ENCODE measurements at regions of chr1 and their contacts with region 1.

Region 1: DNA sequence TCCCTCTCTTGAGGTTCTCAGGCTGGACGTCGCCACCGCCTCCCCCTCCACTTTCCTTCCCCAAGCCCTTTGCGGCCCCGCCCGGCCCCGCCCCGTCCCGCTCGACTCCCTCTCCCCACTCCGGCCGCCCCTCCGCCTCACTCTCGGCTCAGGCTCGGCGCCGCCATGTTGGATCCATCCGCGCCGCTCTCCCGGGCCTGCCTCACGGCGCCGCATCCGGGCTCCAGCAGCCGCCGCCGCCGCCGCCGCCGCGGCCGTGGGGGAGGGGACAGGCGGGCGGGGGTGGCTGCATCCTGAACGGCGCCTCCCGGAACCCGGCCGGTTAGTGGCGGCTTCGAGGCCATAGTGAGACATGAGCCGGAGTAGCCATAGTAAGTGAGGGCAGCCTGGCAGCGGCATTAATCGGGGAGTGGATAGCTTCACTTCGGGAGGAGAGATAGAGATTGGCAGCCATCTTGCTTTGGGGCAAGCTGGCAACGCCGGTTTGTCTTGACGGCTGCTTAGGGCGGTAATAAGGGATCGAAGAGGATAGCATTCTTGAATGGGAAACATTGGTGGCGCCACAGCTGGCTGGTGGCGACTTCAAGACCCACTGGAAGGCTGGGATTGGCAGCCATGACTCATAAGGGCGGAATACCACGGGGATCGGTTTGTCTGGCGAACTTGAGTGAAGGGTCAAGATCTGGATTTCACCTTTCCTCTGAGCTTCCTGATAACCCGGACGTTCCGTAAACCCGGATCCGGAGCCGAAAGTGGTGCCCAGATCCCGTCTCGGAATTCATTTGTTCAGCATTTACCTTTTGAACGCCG is at the start of gene DEDD:
- DNase-seq: peak; percentile 89 to 98
- H3K4me3 ChIP-seq: peak within 1 kb of the TSS; percentile 71 to 89
- H3K27ac ChIP-seq: peak within 1 kb of the TSS; percentile 96 to 98
- H3K4me1 ChIP-seq: peaks cover 5 to 22% of the 10 kb centered on the region in 2 donors
- H3K27me3 ChIP-seq: no peaks in the 10 kb centered on the region
- CTCF ChIP-seq: no peak
- total RNA-seq, gene DEDD: 27.8 TPM

Region 2: GRCh38 chr1:161092621-161093028 is 40.0 kb before region 1 on chr1:
- intact Hi-C with region 1: no loop called
- DNase-seq: no peak
- H3K4me3 ChIP-seq: no peak overlapping the region
- H3K27ac ChIP-seq: no peak overlapping the region
- H3K4me1 ChIP-seq: peaks cover 0 to 5% of the 10 kb centered on the region in 2 donors
- H3K27me3 ChIP-seq: no peaks in the 10 kb centered on the region
- CTCF ChIP-seq: no peak

Region 3: DNA sequence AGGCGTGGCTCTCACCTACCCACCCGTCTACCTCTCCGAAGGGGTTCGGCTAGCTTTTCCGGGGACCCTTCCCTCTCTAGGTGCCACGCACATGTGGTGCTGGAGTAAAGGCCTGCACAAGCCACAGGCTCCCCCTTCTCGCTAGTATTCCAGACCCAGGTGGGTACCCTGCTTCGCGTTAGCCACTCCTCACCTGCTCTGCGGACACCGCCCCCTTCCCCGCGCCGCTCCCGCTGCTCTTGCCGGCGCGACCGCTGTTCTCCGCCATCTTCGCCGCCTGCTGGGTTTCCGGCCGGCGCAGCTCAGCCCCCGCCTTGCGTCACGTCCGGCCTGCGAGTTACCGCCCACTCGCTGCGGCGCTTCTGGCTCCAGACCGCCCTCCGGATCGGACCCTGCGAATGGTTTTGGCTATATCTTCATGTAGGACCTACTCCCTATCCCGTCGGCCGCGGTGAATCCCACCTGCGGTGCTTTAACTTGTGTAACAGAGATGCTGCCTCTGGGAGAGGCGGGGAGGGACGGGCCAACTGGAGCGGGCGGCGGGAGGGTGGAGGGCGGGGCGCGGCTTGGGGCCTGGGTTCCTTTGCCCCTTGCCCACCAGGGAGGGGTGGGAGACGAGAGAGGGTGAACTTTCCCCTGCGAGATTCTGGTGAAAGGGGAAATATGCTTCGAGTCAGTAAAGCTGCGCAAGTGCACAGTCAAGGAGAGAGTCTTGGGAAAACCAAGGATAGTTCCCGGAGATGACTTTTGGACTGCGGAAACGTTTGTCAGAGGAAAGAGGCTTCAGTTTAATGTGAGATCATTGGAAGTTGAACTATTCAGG is 14.6 kb before region 1 on chr1 and contains the starts of genes NIT1 and PFDN2:
- intact Hi-C with region 1: loop called (anchors 1 kb)
- DNase-seq: peak; percentile 37 to 92
- H3K4me3 ChIP-seq: peak within 1 kb of the TSS; percentile 76 to 98
- H3K27ac ChIP-seq: peak within 1 kb of the TSS; percentile 94 to 98
- H3K4me1 ChIP-seq: peaks cover 10 to 26% of the 10 kb centered on the region in 2 donors
- H3K27me3 ChIP-seq: no peaks in the 10 kb centered on the region
- CTCF ChIP-seq: peak in 1 of 3 experiments; percentile 3
- total RNA-seq, gene NIT1: 44.9 TPM
- total RNA-seq, gene PFDN2: 16.3 TPM

Region 4: GRCh38 chr1:161159087-161159912 is 26.7 kb after region 1 on chr1 and contains the start of gene USP21:
- intact Hi-C with region 1: loop called (anchors 2 kb)
- DNase-seq: peak; percentile 61 to 96
- H3K4me3 ChIP-seq: peak within 1 kb of the TSS; percentile 86 to 92
- H3K27ac ChIP-seq: peak within 1 kb of the TSS; percentile 81 to 83
- H3K4me1 ChIP-seq: peaks cover 0 to 31% of the 10 kb centered on the region in 2 donors
- H3K27me3 ChIP-seq: no peaks in the 10 kb centered on the region
- CTCF ChIP-seq: peak; percentile 9 to 47 (median 37)
- total RNA-seq, gene USP21: 31.9 TPM

Region 5: DNA sequence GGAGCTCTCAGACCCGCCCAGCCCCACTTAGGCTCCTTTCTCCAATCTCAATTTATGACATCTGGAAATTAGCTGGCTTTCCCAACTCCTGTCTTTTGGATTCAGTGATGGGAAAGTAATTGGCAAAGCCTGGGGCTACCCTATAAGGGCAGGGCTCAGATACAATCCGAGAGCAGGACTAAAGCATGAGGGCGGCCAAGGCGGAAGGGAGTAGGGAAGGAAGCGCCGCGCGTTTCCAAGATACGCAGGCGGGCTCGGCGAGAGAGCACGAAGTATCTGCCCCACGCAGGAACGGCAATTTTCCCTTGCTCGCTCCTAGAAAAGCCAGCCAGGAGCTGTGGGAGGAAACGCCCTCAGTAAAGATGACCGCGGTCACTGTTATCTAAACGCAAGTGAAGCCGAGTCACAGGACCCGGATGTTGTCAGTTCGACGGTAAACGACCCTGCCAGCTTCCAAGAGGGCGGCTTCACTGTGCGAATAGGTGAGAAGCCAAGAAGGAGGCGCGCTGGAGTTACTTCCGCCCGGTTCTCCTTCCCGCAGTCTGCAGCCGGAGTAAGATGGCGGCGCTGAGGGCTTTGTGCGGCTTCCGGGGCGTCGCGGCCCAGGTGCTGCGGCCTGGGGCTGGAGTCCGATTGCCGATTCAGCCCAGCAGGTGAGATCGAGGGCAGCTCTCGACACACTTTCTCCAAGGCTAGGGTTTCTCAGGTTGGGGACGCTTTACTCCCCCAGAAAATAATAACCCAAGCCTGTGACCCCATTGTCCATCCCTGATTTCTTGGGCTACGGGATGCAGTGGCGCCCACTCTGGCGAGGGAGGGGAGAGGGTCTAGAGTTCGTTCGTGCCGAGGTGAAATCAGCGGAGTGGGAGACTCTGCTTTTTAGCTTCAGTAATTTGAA is 69.5 kb after region 1 on chr1 and contains the start of gene NDUFS2:
- intact Hi-C with region 1: loop called (anchors 1 kb)
- DNase-seq: peak; percentile 94 to 100
- H3K4me3 ChIP-seq: peak within 1 kb of the TSS; percentile 77 to 89
- H3K27ac ChIP-seq: peak within 1 kb of the TSS; percentile 92 to 97
- H3K4me1 ChIP-seq: peaks cover 8 to 32% of the 10 kb centered on the region in 2 donors
- H3K27me3 ChIP-seq: no peaks in the 10 kb centered on the region
- CTCF ChIP-seq: no peak
- total RNA-seq, gene NDUFS2: 107 TPM

Region 6: DNA sequence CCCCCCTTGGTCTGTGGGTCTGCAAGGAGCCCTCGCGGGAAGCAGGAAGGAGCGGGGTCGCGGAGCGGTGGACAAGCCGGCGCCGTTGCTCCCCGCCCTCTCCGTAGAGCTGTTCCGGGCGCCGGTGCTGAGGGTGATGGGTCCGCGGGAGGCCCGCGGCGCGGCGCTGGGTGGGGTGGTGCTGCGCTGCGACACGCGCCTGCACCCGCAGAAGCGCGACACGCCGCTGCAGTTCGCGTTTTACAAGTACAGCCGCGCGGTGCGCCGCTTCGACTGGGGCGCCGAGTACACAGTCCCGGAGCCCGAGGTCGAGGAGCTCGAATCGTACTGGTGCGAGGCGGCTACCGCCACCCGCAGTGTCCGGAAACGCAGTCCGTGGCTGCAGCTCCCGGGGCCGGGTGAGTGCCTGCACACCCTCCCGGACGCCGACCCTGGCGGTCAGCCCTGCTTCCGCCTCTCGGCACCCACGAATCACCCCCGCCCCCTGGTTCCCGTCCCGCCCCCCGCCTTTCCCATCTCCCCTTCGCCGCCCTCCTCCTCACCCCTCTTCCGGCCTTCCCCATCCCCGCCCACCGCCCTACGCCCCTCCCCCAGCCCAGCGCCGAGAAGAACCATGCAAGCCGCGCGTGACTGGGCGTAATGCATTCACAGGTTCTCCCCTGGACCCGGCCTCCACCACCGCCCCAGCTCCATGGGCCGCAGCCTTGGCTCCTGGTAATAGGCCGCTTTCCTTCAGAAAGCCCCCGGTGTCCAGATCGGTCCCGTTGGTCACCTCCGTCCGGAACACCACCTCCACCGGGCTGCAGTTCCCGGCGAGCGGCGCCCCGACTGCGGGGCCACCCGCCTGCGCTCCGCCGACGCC is 594.2 kb after region 1 on chr1:
- intact Hi-C with region 1: loop called (anchors 2 kb)
- DNase-seq: peak; percentile 52 to 91
- H3K4me3 ChIP-seq: peak overlapping the region; percentile 90 to 92
- H3K27ac ChIP-seq: peak overlapping the region; percentile 77 to 81
- H3K4me1 ChIP-seq: peaks cover 2 to 6% of the 10 kb centered on the region in 2 donors
- H3K27me3 ChIP-seq: no peaks in the 10 kb centered on the region
- CTCF ChIP-seq: no peak